Right ventricle myocardium inferior (tissue), 1 donor: ENCODE measurements at regions of chr9 and their contacts with region 1.

Region 1: DNA sequence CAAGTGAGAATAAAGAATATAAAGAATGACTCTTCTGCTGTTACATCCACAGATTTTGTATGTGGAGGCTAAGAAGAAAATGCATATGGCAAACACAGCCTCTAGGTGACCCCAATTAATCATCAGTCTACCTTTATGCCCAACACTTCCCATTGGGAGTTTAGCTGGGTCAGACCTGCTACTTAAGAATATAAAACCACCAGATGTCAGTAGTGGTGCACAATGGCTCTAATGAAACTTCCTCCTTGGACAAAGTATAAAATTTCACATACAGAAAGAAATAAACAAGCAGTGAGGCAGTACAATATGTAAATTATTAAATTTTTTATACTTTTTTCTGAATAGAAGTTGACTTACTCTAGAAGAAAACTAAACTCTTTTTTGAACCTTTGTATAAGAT is 539.9 kb downstream of the BRINP1 start:
- DNase-seq: no peak
- ATAC-seq: no peak

Region 2: DNA sequence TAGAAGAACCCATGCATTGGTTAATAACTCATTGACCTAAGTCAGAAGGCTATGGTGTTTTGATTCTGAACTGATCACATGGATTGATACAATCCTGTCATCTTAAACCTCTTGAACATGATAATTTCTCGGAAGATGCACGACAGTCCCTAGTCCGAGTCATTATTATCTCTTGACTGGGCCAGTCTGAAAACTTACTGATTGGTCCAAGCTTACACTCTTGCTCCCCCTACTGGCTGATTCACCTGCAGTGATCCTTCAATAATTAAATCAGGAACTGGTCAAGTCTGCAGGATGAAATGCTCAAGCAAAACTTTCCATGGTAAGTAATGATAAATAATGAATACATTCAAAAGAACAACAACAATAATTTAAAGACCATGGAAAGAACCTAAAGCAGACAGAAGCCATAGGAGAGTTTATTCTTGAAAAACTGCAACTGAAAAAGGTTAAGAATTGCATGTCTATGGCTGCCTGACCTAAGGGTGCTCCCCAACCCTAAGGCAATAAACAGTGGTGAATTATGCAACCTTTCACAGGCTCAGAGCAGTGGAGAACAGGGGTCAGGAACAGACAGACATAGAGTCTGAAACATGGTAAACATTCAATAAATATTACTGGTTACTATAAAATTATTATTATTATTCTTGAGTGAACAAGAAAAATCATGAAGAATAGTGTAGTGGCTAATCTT is 460.6 kb after region 1 on chr9:
- intact Hi-C with region 1: loop called (anchors 1 kb)
- DNase-seq: no peak
- ATAC-seq: peak; percentile 44

Region 3: GRCh38 chr9:119365291-119366027 is 536.1 kb after region 1 on chr9:
- intact Hi-C with region 1: loop called (anchors 2 kb)
- DNase-seq: no peak
- ATAC-seq: no peak